Heart right ventricle (tissue), 16 donors: ENCODE measurements at regions of chr19 and their contacts with region 1.

Region 1: DNA sequence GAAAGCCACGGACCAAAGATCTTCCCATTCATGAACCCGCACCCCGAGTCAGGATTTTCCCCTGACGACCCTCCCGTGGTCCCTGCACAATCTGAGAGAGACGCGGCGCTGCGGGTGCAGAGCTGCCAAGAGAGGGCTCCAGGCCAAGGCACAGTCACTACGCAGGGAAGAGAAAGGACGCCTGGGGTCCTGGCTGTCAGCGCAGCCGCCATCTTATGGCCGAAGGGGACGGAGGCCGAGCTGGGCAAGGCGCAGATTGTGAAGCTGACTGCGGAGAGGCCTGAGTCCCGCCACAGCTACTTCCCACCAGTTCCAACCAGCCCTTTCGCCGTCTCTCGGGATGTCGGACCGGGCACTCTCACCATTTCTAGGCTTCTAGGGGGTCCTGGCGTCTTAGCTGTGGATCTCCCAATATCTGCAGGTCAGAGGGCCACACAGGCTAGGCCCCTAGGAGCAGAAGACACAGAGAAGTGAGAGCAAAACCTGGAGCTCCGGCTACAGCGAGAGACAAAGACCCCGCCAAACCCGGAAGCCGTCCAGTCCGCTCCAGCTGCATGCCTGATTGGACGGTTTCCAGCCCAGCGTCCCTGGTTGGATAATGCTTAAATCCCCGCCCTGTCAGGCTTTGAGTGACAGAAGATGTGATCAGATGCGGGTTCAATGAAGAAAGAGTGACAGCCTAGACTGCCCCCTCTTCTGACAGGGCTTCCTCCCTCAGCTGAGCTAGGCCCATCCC is at the start of gene ZNF100:
- DNase-seq: peak; percentile 92 to 94
- ATAC-seq: peak; percentile 96 to 99 (median 98)
- H3K4me3 ChIP-seq: peak within 1 kb of the TSS; percentile 65 to 84 (median 77)
- H3K27ac ChIP-seq: peak within 1 kb of the TSS; percentile 62 to 92 (median 84)
- H3K4me1 ChIP-seq: peaks cover 0 to 18% (median 11%) of the 10 kb centered on the region in 9 donors
- H3K27me3 ChIP-seq: no peaks in the 10 kb centered on the region
- CTCF ChIP-seq: no peak
- total RNA-seq, gene ZNF100: 3.2 to 10.3 (median 5.6) TPM

Region 2: DNA sequence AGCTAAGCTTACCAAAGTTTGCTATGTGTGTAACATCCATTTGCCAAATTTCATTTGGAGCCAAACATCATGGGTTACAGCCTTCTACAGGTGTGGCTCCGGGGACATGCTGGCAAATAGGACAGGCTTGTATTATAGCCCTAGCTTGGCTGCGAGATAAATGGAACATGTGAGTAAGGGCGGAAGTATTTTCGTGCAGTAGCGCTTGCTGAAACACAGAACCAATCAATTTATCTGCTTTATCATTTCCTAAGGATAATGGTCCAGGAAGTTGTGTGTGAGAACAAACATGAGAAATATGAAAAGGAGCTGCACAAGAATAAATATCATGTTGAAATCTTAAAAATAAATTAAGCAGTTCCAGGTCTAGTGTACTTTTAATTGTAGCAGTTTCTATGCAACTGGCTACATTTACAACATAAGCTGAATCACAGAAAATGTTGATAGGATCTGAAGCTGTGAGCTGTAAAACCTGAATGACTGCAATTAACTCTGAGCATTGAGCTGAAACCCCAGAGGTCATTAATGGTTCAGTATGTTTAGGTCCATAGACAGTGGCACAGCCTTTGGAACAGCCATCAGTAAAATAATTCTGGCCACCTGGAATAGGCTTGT is 22.3 kb after region 1 on chr19:
- intact Hi-C with region 1: no loop called
- DNase-seq: no peak
- ATAC-seq: no peak
- H3K4me3 ChIP-seq: no peak overlapping the region
- H3K27ac ChIP-seq: no peak overlapping the region
- H3K4me1 ChIP-seq: no peaks in the 10 kb centered on the region
- H3K27me3 ChIP-seq: no peaks in the 10 kb centered on the region
- CTCF ChIP-seq: no peak

Region 3: DNA sequence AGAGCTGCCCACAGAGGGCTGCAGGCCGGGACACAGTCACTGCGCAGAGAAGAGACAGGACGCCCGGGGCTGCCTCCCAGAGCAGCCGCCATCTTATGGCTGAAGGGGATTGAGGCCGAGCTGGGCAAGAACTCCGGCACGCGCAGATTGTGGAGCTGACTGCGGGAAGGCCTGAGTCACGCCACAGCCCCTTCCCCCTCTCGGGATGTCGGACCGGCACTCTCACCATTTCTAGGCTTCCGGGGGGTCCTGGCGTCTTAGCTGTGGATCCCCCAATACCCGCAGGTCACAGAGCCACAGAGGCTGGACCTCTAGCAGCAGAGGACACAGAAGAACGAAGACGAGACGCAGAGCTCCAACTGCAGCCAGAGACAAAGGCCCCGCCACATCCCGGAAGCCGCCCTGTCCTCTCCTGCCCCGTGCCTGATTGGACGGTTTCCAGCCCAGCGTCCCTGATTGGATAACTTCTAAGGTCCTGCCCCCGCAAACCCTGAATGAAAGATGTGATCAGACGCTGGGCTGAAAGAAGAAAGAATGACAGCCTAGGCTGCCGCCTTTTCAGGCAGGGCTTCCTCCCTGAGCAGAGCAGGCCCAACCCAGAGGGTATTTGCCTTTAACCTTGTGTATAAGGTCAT is 68.7 kb after region 1 on chr19 and contains the start of gene ZNF43:
- intact Hi-C with region 1: loop called in 4 of 10 experiments (anchors 5 to 10 kb)
- DNase-seq: peak; percentile 96 to 99
- ATAC-seq: peak; percentile 99 to 100 (median 99)
- H3K4me3 ChIP-seq: peak within 1 kb of the TSS; percentile 64 to 89 (median 79)
- H3K27ac ChIP-seq: peak within 1 kb of the TSS; percentile 87 to 96 (median 92)
- H3K4me1 ChIP-seq: peaks cover 0 to 18% (median 8%) of the 10 kb centered on the region in 9 donors
- H3K27me3 ChIP-seq: no peaks in the 10 kb centered on the region
- CTCF ChIP-seq: no peak
- total RNA-seq, gene ZNF43: 5.0 to 9.5 (median 7.2) TPM

Region 4: DNA sequence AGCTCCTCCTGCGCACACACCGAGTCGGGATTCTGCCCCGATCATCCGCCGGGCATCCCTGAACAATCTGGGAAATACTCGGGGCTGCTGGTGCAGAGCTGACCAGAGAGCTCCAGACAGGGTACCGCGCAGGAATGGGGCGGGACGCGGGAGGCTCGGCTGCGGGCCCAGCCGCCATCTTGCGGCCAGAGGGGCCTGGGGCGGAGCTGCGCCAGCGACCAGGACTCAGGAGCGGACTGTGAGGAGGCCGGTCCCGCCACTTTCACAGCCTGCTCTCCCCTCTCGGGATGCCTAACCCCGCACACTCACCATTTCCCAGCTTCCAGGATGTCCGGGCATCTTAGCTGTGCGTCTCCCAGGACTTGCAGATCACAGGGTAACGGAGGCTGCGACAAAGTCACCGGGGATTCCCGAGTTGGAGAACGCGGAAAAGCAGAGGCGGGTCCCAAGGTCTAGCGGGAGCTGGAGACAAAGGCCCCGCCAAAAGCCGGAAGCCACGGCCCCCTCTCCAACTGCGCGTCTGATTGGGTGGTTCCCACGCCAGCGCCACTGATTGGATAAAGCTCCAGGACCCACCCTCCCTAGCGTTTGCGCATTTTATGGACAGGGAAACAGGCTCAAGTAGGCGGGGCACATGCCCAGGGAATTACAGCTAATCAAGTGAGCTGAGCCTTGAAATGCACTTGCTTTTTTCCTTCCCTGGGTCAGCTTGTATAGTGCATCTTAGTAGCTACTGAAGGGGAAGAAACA is 84.5 kb after region 1 on chr19:
- intact Hi-C with region 1: loop called in 1 of 10 experiments (anchors 10 kb)
- DNase-seq: peak; percentile 93 to 97
- ATAC-seq: peak; percentile 99 to 100 (median 100)
- H3K4me3 ChIP-seq: peak overlapping the region; percentile 53 to 94 (median 82)
- H3K27ac ChIP-seq: peak overlapping the region in 9 of 10 donors; percentile 63 to 89 (median 80)
- H3K4me1 ChIP-seq: peaks cover 0 to 24% (median 10%) of the 10 kb centered on the region in 9 donors
- H3K27me3 ChIP-seq: peaks cover 0 to 9% (median 6%) of the 10 kb centered on the region in 7 donors
- CTCF ChIP-seq: peak in 2 of 9 donors; percentile 8 to 37